Breast epithelium (tissue), 4 donors: ENCODE measurements at regions of chr6 and their contacts with region 1.

Region 1: DNA sequence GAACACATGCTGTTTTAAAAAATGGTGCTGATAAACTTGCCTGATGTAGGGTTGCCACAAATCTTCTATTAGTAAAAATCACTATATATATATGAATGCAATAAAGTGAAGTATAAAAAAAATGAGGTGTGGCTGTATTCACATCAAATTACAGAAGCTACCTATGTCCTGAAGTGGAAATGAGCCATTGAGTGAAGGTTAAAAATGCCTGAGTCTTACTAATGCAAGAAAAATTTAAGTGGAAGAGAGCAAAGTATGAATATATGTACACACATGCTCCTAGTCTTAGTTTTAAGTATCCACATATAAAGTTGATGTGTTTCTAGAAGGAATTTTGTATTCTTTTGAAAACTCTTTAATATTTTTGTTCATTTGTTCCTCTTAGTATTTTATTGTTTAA is 808.3 kb upstream of the MAN1A1 start:
- DNase-seq: no peak
- H3K4me3 ChIP-seq: no peak overlapping the region
- H3K27ac ChIP-seq: no peak overlapping the region
- H3K4me1 ChIP-seq: no peaks in the 10 kb centered on the region
- H3K27me3 ChIP-seq: no peaks in the 10 kb centered on the region
- CTCF ChIP-seq: no peak
- POLR2A ChIP-seq: no peak

Region 2: GRCh38 chr6:120137492-120137891 is 20.4 kb before region 1 on chr6:
- intact Hi-C with region 1: loop called (anchors 2 kb)
- DNase-seq: no peak
- H3K4me3 ChIP-seq: no peak overlapping the region
- H3K27ac ChIP-seq: no peak overlapping the region
- H3K4me1 ChIP-seq: no peaks in the 10 kb centered on the region
- H3K27me3 ChIP-seq: no peaks in the 10 kb centered on the region
- CTCF ChIP-seq: no peak
- POLR2A ChIP-seq: no peak